Dorsolateral prefrontal cortex (tissue), 120 donors: ENCODE measurements at regions of chr2 and their contacts with region 1.

Region 1: GRCh38 chr2:218962859-218963492 is 3.5 kb downstream of the CDK5R2 start:
- DNase-seq: peak; percentile 50 to 95 (median 84)
- H3K4me3 ChIP-seq: peak overlapping the region in 56 of 59 donors; percentile 15 to 78 (median 62)
- H3K27ac ChIP-seq: peak overlapping the region in 15 of 59 donors; percentile 13 to 73 (median 56)
- H3K27me3 ChIP-seq: peaks cover 0 to 90% (median 49%) of the 10 kb centered on the region in 45 donors
- CTCF ChIP-seq: no peak

Region 2: GRCh38 chr2:218814540-218815243 is 148.3 kb before region 1 on chr2:
- intact Hi-C with region 1: no loop called
- DNase-seq: no peak
- H3K4me3 ChIP-seq: no peak overlapping the region
- H3K27ac ChIP-seq: no peak overlapping the region
- H3K27me3 ChIP-seq: no peaks in the 10 kb centered on the region
- CTCF ChIP-seq: no peak

Region 3: GRCh38 chr2:218892693-218893348 is 70.2 kb before region 1 on chr2:
- intact Hi-C with region 1: loop called (anchors 5 kb)
- DNase-seq: peak in 9 of 10 donors; percentile 39 to 80 (median 55)
- H3K4me3 ChIP-seq: peak overlapping the region; percentile 34 to 70 (median 54)
- H3K27ac ChIP-seq: peak overlapping the region in 29 of 59 donors; percentile 8 to 75 (median 59)
- H3K27me3 ChIP-seq: peaks cover 0 to 31% (median 13%) of the 10 kb centered on the region in 45 donors
- CTCF ChIP-seq: peak in 51 of 56 donors; percentile 7 to 71 (median 51)

Region 4: GRCh38 chr2:218898109-218898878 is 64.7 kb before region 1 on chr2:
- intact Hi-C with region 1: loop called (anchors 5 kb)
- DNase-seq: peak in 9 of 10 donors; percentile 35 to 82 (median 62)
- H3K4me3 ChIP-seq: peak overlapping the region in 49 of 59 donors; percentile 3 to 57 (median 38)
- H3K27ac ChIP-seq: peak overlapping the region in 13 of 59 donors; percentile 12 to 62 (median 40)
- H3K27me3 ChIP-seq: peaks cover 0 to 83% (median 41%) of the 10 kb centered on the region in 45 donors
- CTCF ChIP-seq: peak; percentile 76 to 99 (median 97)

Region 5: DNA sequence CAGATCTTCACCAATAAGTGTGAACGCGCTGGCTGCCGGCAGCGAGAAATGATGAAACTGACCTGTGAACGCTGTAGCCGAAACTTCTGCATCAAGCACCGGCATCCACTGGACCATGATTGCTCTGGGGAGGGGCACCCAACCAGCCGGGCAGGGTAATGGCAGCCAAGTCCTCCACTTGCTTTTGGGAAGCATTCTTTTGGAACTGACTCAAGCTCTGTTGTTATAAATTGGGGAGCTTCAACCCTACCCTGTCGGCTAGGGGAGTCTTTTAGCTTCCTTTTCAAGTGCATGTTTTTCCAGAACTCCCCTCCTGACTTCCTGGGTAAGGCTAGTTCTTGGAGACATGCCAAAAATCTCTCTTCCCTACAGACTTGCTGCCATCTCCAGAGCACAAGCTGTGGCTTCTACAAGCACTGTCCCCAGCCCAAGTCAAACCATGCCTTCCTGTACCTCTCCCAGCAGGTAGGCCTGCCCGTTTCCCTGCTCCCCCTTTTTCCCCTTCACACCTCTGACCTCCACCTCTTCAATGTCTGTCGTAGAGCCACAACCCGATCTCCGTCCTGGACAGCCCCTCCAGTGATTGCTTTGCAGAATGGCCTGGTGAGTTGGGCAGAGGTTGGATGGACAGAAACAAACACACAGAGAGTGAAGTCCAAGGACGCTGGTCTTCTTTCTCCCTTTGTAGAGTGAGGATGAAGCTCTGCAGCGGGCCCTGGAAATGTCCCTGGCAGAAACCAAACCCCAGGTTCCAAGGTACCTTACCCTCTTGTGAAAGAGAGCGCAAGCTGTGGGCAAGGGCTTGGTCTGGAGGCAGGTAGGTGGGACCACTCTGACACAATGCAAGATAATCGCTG is 245.1 kb after region 1 on chr2:
- intact Hi-C with region 1: no loop called
- DNase-seq: peak in 1 of 10 donors; percentile 7
- H3K4me3 ChIP-seq: peak overlapping the region in 56 of 59 donors; percentile 52 to 95 (median 78)
- H3K27ac ChIP-seq: peak overlapping the region in 52 of 59 donors; percentile 87 to 99 (median 97)
- H3K27me3 ChIP-seq: no peaks in the 10 kb centered on the region
- CTCF ChIP-seq: no peak